Adrenal gland (tissue), 19 donors: ENCODE measurements at regions of chr18 and their contacts with region 1.

Region 1: DNA sequence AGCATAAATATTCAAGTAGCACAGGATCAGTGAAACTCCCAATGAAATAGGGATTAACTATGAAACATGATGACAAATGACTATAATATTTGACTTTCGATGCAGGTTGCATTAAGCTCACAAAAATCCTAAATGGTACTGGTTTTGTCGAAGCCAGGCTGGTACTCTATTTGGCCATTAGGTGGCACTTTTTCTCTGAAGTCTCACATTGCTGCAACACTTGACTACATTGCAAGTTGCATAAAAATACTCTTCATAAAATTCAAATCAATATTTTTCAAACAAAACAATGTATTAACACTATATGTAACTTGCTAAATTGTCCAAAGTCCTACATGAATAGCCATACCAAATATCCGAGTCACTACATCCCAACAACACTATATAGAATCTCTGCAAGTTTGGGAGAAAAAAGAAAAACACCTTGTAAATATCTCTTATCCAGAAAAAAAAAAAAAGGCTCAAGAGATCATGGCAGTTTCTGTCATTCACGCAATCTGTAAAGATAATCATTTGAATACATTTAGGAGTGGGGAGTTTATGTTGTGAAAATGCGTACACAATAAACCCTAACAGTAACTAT is 9.5 kb downstream of the RTTN start:
- DNase-seq: peak in 5 of 7 donors; percentile 18 to 52 (median 31)
- H3K4me3 ChIP-seq: no peak overlapping the region
- H3K27ac ChIP-seq: no peak overlapping the region
- H3K4me1 ChIP-seq: no peaks in the 10 kb centered on the region
- H3K27me3 ChIP-seq: no peaks in the 10 kb centered on the region
- CTCF ChIP-seq: peak; percentile 66 to 85 (median 76)
- POLR2A ChIP-seq: no peak

Region 2: DNA sequence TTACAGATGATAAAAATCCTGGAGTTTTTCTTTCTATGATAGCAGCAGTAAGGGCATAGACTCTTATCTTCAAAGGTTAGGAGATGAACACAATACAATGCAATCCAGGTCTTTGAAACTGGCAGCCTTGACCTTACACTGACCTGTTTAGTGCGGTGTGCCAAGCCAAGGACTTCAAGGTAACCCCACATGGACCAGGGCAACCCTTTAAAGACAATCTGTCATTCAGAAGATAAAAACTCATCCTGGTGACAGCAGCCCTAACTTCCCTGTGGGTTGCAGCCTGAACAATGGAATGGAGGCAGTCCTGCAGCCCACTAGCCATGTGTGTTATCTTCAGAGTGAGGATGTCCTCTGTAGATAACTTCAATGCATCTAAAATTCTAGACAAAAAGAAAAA is 68.6 kb before region 1 on chr18:
- intact Hi-C with region 1: no loop called
- DNase-seq: no peak
- H3K4me3 ChIP-seq: no peak overlapping the region
- H3K27ac ChIP-seq: no peak overlapping the region
- H3K4me1 ChIP-seq: peaks cover 0 to 6% of the 10 kb centered on the region in 2 donors
- H3K27me3 ChIP-seq: no peaks in the 10 kb centered on the region
- CTCF ChIP-seq: no peak
- POLR2A ChIP-seq: no peak

Region 3: DNA sequence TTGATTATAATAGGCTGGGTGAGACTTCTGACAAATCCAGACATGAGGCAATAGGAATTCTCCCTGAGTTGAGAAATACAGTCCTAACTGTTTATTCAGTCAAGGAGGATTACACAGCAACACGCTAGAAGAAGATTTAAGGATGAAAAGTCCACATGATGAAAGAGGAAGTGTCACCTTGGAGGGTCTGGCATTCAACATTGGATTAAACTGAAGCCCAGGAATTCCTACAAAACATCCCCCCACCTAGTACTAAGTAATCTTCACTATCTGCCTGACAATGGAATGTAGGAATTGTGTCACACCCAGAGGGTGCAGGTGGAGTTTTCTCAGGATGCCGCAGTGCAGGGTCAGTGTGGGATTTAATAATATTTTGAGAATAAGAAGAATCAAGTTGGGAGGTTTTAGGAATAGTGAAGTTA is 235.3 kb after region 1 on chr18:
- intact Hi-C with region 1: loop called (anchors 2 to 5 kb)
- DNase-seq: no peak
- H3K4me3 ChIP-seq: no peak overlapping the region
- H3K27ac ChIP-seq: no peak overlapping the region
- H3K4me1 ChIP-seq: no peaks in the 10 kb centered on the region
- H3K27me3 ChIP-seq: no peaks in the 10 kb centered on the region
- CTCF ChIP-seq: no peak
- POLR2A ChIP-seq: no peak